ENCODE measurements at regions of chr19 and their contacts with region 1.

Region 1: GRCh38 chr19:38701455-38702063 is 42.7 kb downstream of the CAPN12 start:
- DNase-seq: peak; percentile 89 to 96
- H3K4me3 ChIP-seq: no peak overlapping the region
- H3K4me3 Mint-ChIP-seq: peak overlapping the region; percentile 47
- H3K27ac Mint-ChIP-seq: peak overlapping the region; percentile 82
- H3K4me1 ChIP-seq: peaks cover 60% of the 10 kb centered on the region
- H3K4me1 Mint-ChIP-seq: peaks cover 33% of the 10 kb centered on the region
- H3K27me3 ChIP-seq: no peaks in the 10 kb centered on the region
- H3K27me3 Mint-ChIP-seq: no peaks in the 10 kb centered on the region
- CTCF ChIP-seq: no peak

Region 2: DNA sequence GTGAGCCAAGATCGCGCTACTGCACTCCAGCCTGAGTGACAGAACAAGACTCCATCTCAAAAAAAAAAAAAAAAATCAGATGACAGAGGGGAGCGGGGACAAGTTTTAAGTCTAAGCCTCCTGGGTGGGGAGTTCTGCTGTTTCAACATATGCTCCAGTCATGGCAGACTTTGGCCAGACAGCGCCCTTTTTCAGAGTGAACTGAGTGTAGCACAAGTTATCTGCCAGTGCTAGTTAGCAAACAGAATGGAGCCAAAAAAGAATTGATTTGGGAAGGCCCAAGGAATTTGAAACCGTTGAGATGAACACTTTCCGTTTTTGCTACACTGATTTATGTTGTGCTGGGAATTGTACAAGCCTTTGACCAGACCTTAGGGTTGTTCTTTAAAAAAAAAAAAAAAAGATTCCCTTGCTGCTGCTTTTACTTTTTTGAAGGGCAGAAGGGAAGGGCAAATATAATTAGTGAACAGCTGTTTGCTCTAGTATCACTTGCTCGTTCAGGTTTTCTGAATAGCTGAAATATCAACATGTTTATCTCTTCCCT is 48.5 kb before region 1 on chr19:
- CTCF ChIA-PET with region 1: no interaction called
- POLR2A ChIA-PET with region 1: interaction called, 13 read pairs
- intact Hi-C with region 1: loop called (anchors 1 kb)
- DNase-seq: peak; percentile 73 to 81
- H3K4me3 ChIP-seq: no peak overlapping the region; the same call in 1 of the 2 replicates
- H3K4me3 Mint-ChIP-seq: peak overlapping the region; percentile 59
- H3K27ac Mint-ChIP-seq: peak overlapping the region; percentile 84
- H3K4me1 ChIP-seq: peaks cover 87% of the 10 kb centered on the region
- H3K4me1 Mint-ChIP-seq: peaks cover 62% of the 10 kb centered on the region
- H3K27me3 ChIP-seq: no peaks in the 10 kb centered on the region
- H3K27me3 Mint-ChIP-seq: no peaks in the 10 kb centered on the region
- CTCF ChIP-seq: no peak

Region 3: DNA sequence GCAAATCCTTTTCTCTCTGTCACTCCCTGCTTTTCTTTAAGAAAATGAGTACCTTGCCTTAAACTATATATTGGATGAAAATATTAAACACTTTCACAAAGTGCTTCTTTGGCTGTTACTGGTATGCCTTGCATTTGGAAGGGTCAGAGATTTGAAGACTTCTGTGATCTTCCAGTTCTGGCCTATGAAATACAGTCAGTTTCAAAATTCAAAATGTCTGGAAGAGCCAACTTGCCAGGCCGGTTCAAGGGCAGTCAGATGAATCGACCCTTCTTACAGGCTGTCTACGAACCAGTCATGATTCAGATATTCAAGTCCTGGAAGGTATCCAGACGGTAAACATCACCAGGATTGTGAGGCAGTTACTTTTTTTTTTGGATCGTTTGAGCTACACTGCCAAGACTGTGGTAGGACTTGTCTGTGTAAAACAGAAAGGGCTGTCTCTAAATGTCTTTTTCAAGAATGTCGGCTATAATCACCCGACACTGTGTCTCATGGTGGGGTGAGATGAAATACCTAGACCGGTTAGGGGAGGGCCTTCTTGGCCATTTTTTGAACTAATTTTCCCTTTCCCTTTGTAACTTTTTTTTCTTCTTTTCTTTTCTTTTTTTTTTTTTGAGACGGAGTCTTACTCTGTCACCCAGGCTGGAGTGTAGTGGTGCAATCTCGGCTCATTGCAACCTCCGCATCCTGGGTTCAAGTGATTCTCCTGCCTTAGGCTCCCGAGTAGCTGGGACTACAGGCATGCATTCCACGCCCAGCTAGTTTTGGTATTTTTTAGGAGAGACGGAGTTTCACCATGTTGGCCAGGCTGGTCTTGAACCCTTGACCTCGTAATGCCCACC is 42.9 kb before region 1 on chr19:
- CTCF ChIA-PET with region 1: interaction called, 6 read pairs
- POLR2A ChIA-PET with region 1: interaction called, 5 read pairs
- intact Hi-C with region 1: loop called (anchors 1 kb)
- DNase-seq: peak; percentile 76 to 81
- H3K4me3 ChIP-seq: no peak overlapping the region
- H3K4me3 Mint-ChIP-seq: peak overlapping the region; percentile 62
- H3K27ac Mint-ChIP-seq: peak overlapping the region; percentile 98
- H3K4me1 ChIP-seq: peaks cover 100% of the 10 kb centered on the region
- H3K4me1 Mint-ChIP-seq: peaks cover 78% of the 10 kb centered on the region
- H3K27me3 ChIP-seq: no peaks in the 10 kb centered on the region
- H3K27me3 Mint-ChIP-seq: no peaks in the 10 kb centered on the region
- CTCF ChIP-seq: no peak

Region 4: DNA sequence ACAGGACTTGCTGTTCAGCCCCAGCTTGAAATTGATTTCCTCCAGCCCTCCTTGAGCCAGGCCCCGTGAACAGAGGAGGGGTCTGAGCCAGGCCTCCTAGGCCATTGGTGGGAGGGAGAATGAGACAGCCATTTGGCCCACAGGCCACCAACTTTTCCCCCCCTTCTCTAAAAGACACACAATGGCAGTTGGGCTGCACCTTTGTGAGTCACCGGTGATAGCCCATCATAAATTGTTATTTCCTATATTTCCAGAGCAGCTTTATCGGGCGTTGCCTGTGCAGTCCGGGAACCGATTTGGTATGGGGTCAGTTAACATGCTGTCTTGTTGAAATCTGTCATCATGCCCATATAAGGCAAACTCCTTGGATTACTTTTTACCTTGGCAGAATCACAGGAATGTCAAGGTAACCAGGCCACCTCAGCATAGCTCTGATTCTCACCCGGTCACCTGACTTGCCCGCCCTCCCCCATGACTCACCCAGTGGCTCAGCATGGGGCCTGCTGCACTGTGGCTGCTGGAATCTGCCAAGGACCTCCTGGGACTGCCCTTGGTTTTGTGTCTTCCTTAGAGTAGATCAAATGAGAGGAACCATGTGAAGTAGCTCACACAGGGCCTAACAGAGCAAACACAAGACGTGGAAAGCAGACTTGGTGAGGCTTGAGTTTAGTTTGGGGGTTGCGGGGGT is 18.0 kb before region 1 on chr19:
- CTCF ChIA-PET with region 1: interaction called, 9 read pairs
- POLR2A ChIA-PET with region 1: interaction called, 22 read pairs
- intact Hi-C with region 1: loop called (anchors 1 kb)
- DNase-seq: peak; percentile 96 to 98
- H3K4me3 ChIP-seq: no peak overlapping the region
- H3K4me3 Mint-ChIP-seq: peak overlapping the region; percentile 57
- H3K27ac Mint-ChIP-seq: peak overlapping the region; percentile 95
- H3K4me1 ChIP-seq: peaks cover 70% of the 10 kb centered on the region
- H3K4me1 Mint-ChIP-seq: peaks cover 81% of the 10 kb centered on the region
- H3K27me3 ChIP-seq: no peaks in the 10 kb centered on the region
- H3K27me3 Mint-ChIP-seq: no peaks in the 10 kb centered on the region
- CTCF ChIP-seq: no peak

Region 5: GRCh38 chr19:38718747-38719543 is 17.4 kb after region 1 on chr19:
- CTCF ChIA-PET with region 1: no interaction called
- POLR2A ChIA-PET with region 1: no interaction called
- intact Hi-C with region 1: loop called (anchors 2 kb)
- DNase-seq: no peak
- H3K4me3 ChIP-seq: no peak overlapping the region
- H3K4me3 Mint-ChIP-seq: peak overlapping the region; percentile 20
- H3K27ac Mint-ChIP-seq: peak overlapping the region; percentile 59
- H3K4me1 ChIP-seq: peaks cover 30% of the 10 kb centered on the region
- H3K4me1 Mint-ChIP-seq: peaks cover 6% of the 10 kb centered on the region
- H3K27me3 ChIP-seq: no peaks in the 10 kb centered on the region
- H3K27me3 Mint-ChIP-seq: no peaks in the 10 kb centered on the region
- CTCF ChIP-seq: peak in 1 of 2 experiments; percentile 44